ENCODE measurements at regions of chr2 and their contacts with region 1.

Region 1: DNA sequence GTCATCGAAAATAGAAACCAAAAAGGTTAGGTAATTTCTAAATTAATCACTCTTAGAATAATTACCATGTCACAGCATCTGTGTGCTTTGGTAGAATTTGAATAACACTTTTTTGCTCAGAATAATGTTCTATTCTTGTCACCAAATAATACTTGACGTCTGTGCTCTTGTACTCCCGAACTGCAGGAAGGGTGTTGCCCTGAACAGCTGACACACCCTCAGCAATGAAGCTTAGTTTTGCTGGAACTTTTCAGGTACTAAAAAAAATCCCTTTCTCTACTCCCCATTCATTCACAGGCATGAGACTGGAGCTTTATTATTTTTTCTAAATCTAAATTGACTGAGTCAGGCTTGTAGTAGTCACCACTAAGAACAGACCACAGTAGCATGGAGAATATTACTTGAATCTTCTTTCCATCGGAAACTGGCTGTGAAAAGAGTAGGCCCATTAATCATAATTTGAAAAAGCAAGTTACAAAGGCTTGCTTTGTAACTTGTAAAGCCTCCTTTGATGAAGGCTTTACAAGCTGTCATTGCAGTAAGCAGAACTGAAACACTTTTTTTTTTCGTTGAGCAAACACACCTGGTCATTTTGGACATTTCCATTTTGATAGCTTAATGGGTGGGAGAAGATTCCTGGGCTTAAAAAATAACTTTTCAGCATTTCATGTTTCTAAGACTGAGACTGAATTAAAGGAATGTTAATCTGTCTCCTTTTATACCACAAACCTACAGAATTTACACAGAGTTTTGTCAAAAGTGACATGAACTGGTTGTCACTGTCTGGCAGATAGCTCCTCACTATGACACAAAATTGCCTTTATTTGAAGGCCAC is 70.3 kb upstream of the PELI1 start:
- DNase-seq: peak; percentile 62
- H3K4me3 Mint-ChIP-seq: peak overlapping the region; percentile 61
- H3K27ac Mint-ChIP-seq: peak overlapping the region; percentile 96
- H3K4me1 Mint-ChIP-seq: peaks cover 63% of the 10 kb centered on the region
- H3K27me3 Mint-ChIP-seq: no peaks in the 10 kb centered on the region

Region 2: GRCh38 chr2:63588385-63589147 is 625.9 kb before region 1 on chr2 and contains the starts of genes MDH1 and WDPCP:
- CTCF ChIA-PET with region 1: no interaction called
- intact Hi-C with region 1: loop called (anchors 2 kb)
- DNase-seq: peak; percentile 95
- H3K4me3 Mint-ChIP-seq: peak within 1 kb of the TSS; percentile 99
- H3K27ac Mint-ChIP-seq: peak within 1 kb of the TSS; percentile 94
- H3K4me1 Mint-ChIP-seq: peaks cover 31% of the 10 kb centered on the region
- H3K27me3 Mint-ChIP-seq: no peaks in the 10 kb centered on the region
- total RNA-seq, gene MDH1: 269 to 275 TPM
- total RNA-seq, gene WDPCP: 5.6 to 5.7 TPM

Region 3: GRCh38 chr2:63903003-63903402 is 311.5 kb before region 1 on chr2:
- CTCF ChIA-PET with region 1: no interaction called
- intact Hi-C with region 1: loop called (anchors 5 kb)
- DNase-seq: no peak
- H3K4me3 Mint-ChIP-seq: no peak overlapping the region
- H3K27ac Mint-ChIP-seq: no peak overlapping the region
- H3K4me1 Mint-ChIP-seq: peaks cover 18% of the 10 kb centered on the region
- H3K27me3 Mint-ChIP-seq: no peaks in the 10 kb centered on the region

Region 4: DNA sequence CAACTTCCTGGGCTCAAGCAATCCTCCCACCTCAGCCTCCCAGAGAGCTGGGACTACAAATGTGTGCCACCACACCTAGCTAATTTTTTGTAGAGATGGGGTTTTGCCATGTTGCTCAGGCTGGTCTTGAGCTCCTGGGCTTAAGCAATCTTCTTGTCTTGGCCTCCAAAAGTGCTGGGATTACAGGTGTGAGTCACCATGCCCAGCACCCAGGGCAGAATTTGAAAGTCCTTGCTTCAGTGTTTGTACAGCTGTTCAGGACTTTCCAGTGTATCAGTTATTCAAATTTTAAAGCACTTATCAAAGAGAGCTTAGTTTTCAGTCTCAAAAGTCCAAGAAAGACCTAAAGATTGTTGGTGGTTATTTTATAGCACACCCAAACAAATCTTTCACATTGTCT is 151.7 kb before region 1 on chr2:
- CTCF ChIA-PET with region 1: interaction called, 4 read pairs
- intact Hi-C with region 1: loop called (anchors 1 kb)
- DNase-seq: peak; percentile 36
- H3K4me3 Mint-ChIP-seq: no peak overlapping the region
- H3K27ac Mint-ChIP-seq: peak overlapping the region; percentile 23
- H3K4me1 Mint-ChIP-seq: peaks cover 36% of the 10 kb centered on the region
- H3K27me3 Mint-ChIP-seq: no peaks in the 10 kb centered on the region

Region 5: GRCh38 chr2:64133828-64134227 is 80.7 kb before region 1 on chr2:
- CTCF ChIA-PET with region 1: interaction called, 6 read pairs
- intact Hi-C with region 1: loop called (anchors 1 kb)
- DNase-seq: no peak
- H3K4me3 Mint-ChIP-seq: no peak overlapping the region
- H3K27ac Mint-ChIP-seq: peak overlapping the region; percentile 72
- H3K4me1 Mint-ChIP-seq: peaks cover 88% of the 10 kb centered on the region
- H3K27me3 Mint-ChIP-seq: no peaks in the 10 kb centered on the region

Region 6: DNA sequence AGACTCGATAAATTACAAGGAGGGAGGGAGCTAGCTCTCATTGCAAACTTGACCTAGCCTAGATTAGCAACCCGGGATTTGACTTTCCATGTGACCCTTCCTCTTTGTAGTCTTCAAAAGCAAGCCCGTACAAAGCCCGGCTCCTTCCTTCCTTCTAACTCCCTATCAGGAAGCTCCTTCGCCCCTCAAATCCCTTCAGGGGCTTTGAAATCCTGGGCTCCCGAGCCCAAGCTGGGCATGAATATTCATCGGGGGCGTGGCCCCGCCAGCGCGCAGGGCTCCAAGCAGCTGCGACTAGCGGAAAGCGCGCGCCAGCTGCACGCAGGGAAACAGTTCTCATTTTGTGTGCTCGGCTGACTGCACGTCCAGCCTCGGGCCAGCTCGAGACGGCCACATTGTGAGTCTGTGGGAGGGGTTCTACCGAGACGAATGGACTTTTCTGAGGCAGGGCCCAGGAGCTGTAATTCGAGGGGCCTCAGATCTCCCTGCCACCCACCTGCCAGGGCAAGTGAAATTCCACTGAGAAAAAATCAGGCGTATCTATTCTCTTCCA is 13.7 kb after region 1 on chr2:
- CTCF ChIA-PET with region 1: interaction called, 9 read pairs
- intact Hi-C with region 1: loop called (anchors 1 kb)
- DNase-seq: peak; percentile 76
- H3K4me3 Mint-ChIP-seq: peak overlapping the region; percentile 92
- H3K27ac Mint-ChIP-seq: peak overlapping the region; percentile 89
- H3K4me1 Mint-ChIP-seq: peaks cover 31% of the 10 kb centered on the region
- H3K27me3 Mint-ChIP-seq: no peaks in the 10 kb centered on the region

Region 7: DNA sequence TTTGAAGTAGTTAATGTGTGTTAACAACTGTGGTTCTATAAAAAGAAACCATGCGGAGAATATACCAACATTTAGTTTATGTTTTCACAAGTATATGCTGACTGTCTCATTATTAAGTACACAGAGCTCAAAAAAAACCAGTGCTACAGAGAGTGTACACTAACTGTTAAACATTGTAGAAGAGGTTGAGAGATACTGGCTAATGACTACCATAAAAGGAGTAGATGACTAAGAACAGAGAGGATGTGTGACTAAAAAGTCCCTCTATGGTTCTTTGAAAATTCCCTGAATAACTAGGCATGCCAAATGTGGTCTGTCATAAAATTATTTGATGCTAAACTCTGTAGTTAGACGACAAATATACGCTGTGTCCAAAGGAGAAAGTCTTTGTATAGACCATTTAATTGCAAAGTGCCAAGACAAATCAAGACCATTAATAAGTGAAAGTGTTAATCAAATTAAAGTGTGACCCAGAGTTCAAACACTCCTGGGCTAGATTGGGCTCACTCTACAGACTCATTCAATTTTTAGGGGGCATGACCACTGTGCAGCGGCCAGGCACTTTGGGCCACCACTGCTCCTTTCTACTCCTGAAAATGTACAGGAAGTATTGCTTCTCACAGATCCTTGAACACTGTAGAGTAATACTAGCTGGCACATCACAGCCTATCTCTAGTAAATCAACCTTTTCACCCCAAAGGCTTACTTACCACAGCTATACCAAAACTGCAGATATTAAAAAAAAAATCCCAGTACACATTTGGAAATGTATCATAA is 484.4 kb after region 1 on chr2:
- CTCF ChIA-PET with region 1: no interaction called
- intact Hi-C with region 1: loop called (anchors 1 kb)
- DNase-seq: no peak
- H3K4me3 Mint-ChIP-seq: peak overlapping the region; percentile 8
- H3K27ac Mint-ChIP-seq: peak overlapping the region; percentile 68
- H3K4me1 Mint-ChIP-seq: peaks cover 47% of the 10 kb centered on the region
- H3K27me3 Mint-ChIP-seq: no peaks in the 10 kb centered on the region